Heart left ventricle (tissue), 16 donors: ENCODE measurements at regions of chr13 and their contacts with region 1.

Region 1: DNA sequence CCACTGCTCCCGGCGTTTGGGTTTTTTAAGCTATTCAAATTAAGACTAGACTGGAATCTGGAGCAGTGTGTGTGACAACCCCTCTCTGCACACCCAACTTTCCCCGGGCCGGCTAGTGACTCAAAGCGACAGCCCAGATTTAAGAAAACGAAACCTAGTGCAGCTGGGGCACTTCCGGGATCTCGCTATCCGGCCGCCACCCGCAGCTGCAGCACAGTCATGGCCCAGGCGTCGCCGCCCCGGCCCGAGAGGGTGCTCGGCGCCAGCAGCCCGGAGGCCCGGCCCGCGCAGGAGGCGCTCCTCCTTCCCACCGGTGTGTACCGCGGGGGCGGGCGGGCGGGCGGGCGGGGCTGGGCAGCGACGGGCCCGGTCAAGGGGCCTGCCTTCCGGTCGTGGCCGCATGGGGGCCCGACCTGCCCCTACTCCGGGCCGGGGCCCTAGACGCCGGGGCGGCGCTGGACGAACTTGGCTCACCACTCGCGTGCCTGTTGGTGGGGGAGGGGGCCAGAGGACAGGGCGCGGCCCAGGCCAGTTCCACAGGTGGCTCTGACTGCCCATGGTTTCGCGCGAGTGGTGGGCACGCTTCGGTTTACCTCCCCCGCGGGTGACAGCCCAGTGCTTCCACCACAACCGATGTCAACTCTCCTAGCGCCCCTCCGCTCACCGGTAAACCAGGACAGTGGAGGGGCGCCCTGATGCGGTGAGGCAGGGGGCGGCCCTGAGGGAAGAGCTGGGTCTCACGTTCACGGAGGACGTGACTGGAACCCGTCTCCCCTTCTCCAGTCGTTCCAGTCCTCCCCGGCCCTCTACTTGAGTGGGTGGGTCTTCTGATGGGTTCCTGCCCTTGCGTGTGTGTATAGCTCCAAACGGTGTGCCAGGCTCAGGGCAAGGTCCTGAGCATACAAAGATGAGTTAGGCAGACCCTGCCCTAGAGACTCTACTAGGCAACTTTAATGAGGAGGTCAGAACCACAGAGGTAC is at the start of gene PHF11:
- DNase-seq: peak; percentile 82 to 91 (median 88)
- ATAC-seq: peak; percentile 71 to 92 (median 90)
- H3K4me3 ChIP-seq: peak within 1 kb of the TSS; percentile 56 to 86 (median 70)
- H3K27ac ChIP-seq: peak within 1 kb of the TSS; percentile 83 to 99 (median 95)
- H3K4me1 ChIP-seq: peaks cover 0 to 39% (median 8%) of the 10 kb centered on the region in 12 donors
- H3K27me3 ChIP-seq: no peaks in the 10 kb centered on the region
- CTCF ChIP-seq: peak in 9 of 12 donors; percentile 10 to 37 (median 23)
- POLR2A ChIP-seq: peak in 1 of 2 donors; percentile 43
- total RNA-seq, gene PHF11: 13.7 to 48.5 (median 16.5) TPM

Region 2: DNA sequence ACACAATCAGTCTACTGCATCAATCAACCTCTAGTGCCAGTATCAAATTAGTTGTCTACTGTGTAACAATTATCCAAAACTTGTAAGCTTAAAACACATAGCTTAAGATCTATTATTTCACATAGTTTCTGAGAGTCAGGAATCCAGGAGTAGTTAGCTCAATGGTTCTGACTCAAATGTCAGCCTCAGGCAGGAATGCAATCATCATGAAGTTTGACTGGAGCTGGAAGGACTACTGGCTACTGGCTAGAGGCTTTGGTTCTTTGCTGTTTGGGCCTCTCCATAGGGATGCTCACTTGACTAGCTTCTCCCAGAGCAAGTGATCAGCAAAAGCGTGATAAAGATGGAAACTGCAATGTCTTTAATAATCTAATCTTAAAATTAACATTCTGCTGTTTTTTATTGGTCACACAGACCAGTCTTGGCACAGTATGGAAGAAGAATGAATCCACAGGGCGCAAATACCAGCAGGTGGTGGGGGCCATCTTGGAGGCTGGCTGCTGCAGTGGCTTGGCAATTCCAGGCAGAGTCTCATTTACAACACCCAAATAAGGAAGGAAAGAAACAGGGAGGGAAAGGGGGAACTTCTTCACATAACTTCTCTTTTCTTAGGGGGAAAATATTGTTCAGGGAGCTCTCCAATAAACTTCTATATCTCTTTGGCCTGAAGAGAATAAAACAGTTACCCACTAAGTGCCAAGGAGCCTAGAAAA is 67.9 kb before region 1 on chr13:
- intact Hi-C with region 1: no loop called
- DNase-seq: peak in 1 of 5 donors; percentile 21
- ATAC-seq: no peak
- H3K4me3 ChIP-seq: no peak overlapping the region
- H3K27ac ChIP-seq: no peak overlapping the region
- H3K4me1 ChIP-seq: no peaks in the 10 kb centered on the region
- H3K27me3 ChIP-seq: no peaks in the 10 kb centered on the region
- CTCF ChIP-seq: no peak
- POLR2A ChIP-seq: no peak

Region 3: GRCh38 chr13:49443704-49444523 is 52.2 kb before region 1 on chr13 and contains the starts of genes CAB39L and SETDB2:
- intact Hi-C with region 1: loop called in 5 of 10 experiments (anchors 2 to 10 kb)
- DNase-seq: peak; percentile 99 to 100 (median 99)
- ATAC-seq: peak; percentile 98 to 99 (median 99)
- H3K4me3 ChIP-seq: peak within 1 kb of the TSS; percentile 40 to 88 (median 82)
- H3K27ac ChIP-seq: peak within 1 kb of the TSS; percentile 81 to 99 (median 92)
- H3K4me1 ChIP-seq: peaks cover 0 to 47% (median 16%) of the 10 kb centered on the region in 12 donors
- H3K27me3 ChIP-seq: no peaks in the 10 kb centered on the region
- CTCF ChIP-seq: peak in 11 of 12 donors; percentile 10 to 70 (median 37)
- POLR2A ChIP-seq: peak in 1 of 2 donors; percentile 83
- total RNA-seq, gene CAB39L: 10.2 to 27.4 (median 19.0) TPM
- total RNA-seq, gene SETDB2: 7.9 to 19.8 (median 13.5) TPM

Region 4: GRCh38 chr13:49540552-49540951 is 44.5 kb after region 1 on chr13:
- intact Hi-C with region 1: loop called in 1 of 10 experiments (anchors 10 kb)
- DNase-seq: no peak
- ATAC-seq: peak in 1 of 4 donors; percentile 74
- H3K4me3 ChIP-seq: peak overlapping the region in 7 of 12 donors; percentile 13 to 32 (median 20)
- H3K27ac ChIP-seq: peak overlapping the region in 10 of 12 donors; percentile 1 to 65 (median 20)
- H3K4me1 ChIP-seq: peaks cover 0 to 31% (median 0%) of the 10 kb centered on the region in 12 donors
- H3K27me3 ChIP-seq: no peaks in the 10 kb centered on the region
- CTCF ChIP-seq: no peak
- POLR2A ChIP-seq: no peak

Region 5: DNA sequence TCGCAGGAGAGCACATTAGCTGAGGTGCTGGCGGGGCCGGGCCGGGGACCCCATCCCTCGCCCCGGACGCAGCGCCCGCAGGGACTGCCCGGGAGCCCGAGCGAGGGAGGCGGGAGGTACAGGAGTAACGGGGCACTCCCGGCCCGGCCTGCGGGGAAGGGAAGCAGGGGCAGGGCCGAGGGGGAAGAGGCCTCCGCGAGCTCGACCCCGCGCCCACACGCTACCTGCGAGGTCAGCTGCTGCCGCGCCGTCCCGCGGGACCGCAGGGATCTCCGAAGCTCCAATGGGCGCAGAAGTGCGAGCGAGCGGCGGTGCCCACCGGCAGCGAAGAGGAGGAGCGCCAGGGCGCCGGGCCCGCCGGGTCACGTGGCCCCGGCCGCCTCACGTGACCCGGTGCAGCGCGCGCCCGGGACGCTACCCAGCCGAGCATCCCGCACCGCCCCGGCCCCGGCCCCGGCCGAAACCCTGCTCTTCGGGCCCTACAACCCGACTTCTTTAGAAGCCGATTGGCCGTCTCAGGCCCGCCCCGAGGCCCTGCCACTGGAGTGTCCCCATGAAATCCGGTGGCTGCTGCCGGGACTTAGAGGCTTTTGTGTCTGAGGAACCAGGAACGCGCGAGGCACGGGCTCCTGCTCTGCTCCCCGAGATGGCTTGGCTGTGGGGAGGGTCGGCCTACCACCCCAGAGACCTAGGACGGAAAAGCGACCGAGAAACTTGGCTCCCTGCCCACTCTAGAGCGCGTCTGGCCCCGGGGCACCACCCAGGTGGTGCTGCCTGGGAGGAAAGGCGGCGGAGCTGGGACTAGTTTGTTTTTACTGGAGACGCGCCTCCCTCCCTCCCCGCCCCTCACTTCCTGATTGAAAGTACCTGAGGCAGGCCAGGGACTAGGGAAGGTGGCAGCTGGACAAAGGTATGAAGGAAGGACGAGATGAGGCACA is 89.4 kb after region 1 on chr13 and contains the start of gene RCBTB1:
- intact Hi-C with region 1: loop called in 2 of 10 experiments (anchors 10 kb)
- DNase-seq: peak; percentile 67 to 85 (median 71)
- ATAC-seq: peak; percentile 85 to 99 (median 96)
- H3K4me3 ChIP-seq: peak within 1 kb of the TSS; percentile 73 to 99 (median 91)
- H3K27ac ChIP-seq: peak within 1 kb of the TSS; percentile 38 to 93 (median 83)
- H3K4me1 ChIP-seq: peaks cover 0 to 23% (median 13%) of the 10 kb centered on the region in 12 donors
- H3K27me3 ChIP-seq: no peaks in the 10 kb centered on the region
- CTCF ChIP-seq: no peak
- POLR2A ChIP-seq: peak in 1 of 2 donors; percentile 53
- total RNA-seq, gene RCBTB1: 10.9 to 25.8 (median 17.2) TPM